Transverse colon (tissue), 4 donors: ENCODE measurements at regions of chr12 and their contacts with region 1.

Region 1: DNA sequence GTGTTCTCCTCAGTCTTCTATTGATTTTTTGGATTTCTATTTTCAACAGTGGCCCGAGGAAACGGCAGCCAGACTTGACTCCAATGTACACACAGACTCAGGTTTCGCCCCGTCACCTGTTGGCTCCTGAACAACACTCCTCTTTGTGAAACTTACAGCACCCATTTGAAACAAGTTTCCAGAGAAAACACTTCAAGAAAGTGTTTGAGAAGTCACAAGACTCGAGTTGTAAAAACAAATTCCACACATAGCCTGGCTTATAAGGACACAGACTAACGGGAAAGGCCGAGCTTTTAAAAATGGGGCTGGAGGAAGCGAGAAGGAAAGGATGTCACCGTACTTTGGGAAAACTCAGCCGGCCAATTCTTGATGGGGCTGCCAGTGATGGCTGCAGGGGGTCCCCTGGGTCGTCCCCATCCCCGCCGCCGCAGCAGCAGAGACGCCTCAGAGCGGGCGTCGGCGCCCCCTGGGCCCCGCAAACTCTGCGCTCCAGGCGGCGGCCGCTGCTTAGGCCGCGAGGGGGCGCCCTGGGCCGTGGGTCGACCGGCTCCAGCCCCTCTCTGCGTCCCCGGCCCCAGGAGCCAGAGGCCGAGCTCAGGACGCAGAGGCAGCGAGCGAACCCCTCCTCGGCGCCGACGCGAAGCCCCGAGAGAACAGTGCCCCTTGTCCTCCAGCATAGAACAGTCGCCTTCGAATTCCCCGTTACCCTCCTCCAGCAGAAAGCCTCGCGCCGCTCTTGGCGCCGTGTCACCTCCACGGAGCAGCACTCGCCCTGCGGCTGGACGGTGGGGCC is 106.9 kb downstream of the PRICKLE1 start:
- DNase-seq: peak; percentile 66
- H3K4me3 ChIP-seq: peak overlapping the region; percentile 50 to 70 (median 64)
- H3K27ac ChIP-seq: peak overlapping the region; percentile 82 to 87 (median 84)
- H3K4me1 ChIP-seq: peaks cover 0 to 18% (median 8%) of the 10 kb centered on the region in 4 donors
- H3K27me3 ChIP-seq: peaks cover 40% of the 10 kb centered on the region
- CTCF ChIP-seq: peak; percentile 71 to 95 (median 85)
- EP300 ChIP-seq: no peak
- POLR2A ChIP-seq: no peak

Region 2: DNA sequence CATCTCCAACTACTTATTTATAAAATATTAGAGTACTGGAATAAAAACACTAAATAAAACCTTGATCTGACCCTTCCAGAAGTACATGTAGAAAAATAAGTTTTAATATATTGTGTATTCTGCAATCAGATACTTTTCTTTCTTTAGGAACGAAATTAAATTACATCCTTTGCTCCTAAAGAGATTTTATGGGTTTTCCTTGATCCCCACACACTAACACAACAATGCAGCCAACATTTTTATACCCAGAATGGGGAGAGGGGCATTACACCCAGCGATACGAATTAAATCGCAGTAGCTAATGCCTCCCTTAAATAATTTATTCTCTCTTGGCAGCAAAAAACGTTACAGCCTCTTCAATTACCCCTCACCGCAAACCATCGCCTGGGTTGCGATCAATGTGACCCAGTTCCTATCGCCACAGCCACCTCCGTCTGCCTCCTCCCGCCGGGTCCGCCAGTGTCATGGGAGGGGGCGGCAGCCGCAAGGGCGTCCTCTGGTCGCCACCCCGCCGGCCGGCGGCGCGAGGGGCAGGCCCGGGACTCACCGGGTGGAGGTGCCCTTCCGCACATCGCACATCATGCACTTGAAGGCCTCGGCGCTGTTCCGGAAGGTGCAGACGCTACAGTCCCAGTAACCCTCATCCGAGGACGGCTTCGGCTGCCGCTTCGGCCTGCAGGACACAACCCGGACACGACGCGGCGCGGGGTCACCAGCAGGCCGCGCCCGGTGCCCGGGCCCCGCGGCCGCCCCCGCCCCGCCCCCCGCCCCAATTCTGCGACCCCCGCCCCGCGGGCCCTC is 245.4 kb before region 1 on chr12:
- in situ Hi-C with region 1: no loop called
- intact Hi-C with region 1: no loop called
- DNase-seq: peak; percentile 82
- H3K4me3 ChIP-seq: peak overlapping the region; percentile 49 to 95 (median 74)
- H3K27ac ChIP-seq: peak overlapping the region; percentile 97 to 98 (median 98)
- H3K4me1 ChIP-seq: peaks cover 0 to 38% (median 23%) of the 10 kb centered on the region in 4 donors
- H3K27me3 ChIP-seq: no peaks in the 10 kb centered on the region
- CTCF ChIP-seq: peak; percentile 36 to 65 (median 49)
- EP300 ChIP-seq: no peak
- POLR2A ChIP-seq: peak; percentile 47

Region 3: GRCh38 chr12:42284157-42284556 is 198.5 kb before region 1 on chr12:
- in situ Hi-C with region 1: no loop called
- intact Hi-C with region 1: no loop called
- DNase-seq: no peak
- H3K4me3 ChIP-seq: no peak overlapping the region
- H3K27ac ChIP-seq: no peak overlapping the region
- H3K4me1 ChIP-seq: no peaks in the 10 kb centered on the region
- H3K27me3 ChIP-seq: no peaks in the 10 kb centered on the region
- CTCF ChIP-seq: no peak
- EP300 ChIP-seq: no peak
- POLR2A ChIP-seq: no peak

Region 4: DNA sequence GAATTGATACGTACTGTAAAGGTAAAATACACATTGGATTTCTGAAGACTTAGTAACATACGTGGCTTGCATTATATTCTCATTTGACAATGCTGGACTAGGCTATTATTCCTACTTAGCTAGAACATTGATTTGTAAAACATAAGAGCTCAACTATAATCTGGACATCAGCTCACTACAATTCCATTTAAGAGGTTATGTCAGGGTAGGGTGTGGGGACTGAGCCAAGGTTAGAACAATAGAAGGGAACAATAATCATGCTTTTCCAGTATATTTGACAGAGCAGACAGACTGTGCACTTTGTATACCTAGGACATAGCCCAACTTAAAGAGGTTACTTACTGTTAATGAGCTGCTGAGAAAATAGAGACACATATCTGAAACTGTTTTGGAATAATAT is 167.5 kb before region 1 on chr12:
- in situ Hi-C with region 1: no loop called
- intact Hi-C with region 1: no loop called
- DNase-seq: no peak
- H3K4me3 ChIP-seq: no peak overlapping the region
- H3K27ac ChIP-seq: no peak overlapping the region
- H3K4me1 ChIP-seq: no peaks in the 10 kb centered on the region
- H3K27me3 ChIP-seq: no peaks in the 10 kb centered on the region
- CTCF ChIP-seq: no peak
- EP300 ChIP-seq: no peak
- POLR2A ChIP-seq: no peak

Region 5: GRCh38 chr12:42524716-42525115 is 42.1 kb after region 1 on chr12:
- in situ Hi-C with region 1: no loop called
- intact Hi-C with region 1: no loop called
- DNase-seq: no peak
- H3K4me3 ChIP-seq: no peak overlapping the region
- H3K27ac ChIP-seq: no peak overlapping the region
- H3K4me1 ChIP-seq: no peaks in the 10 kb centered on the region
- H3K27me3 ChIP-seq: no peaks in the 10 kb centered on the region
- CTCF ChIP-seq: no peak
- EP300 ChIP-seq: no peak
- POLR2A ChIP-seq: no peak

Region 6: GRCh38 chr12:42574851-42575266 is 92.2 kb after region 1 on chr12:
- in situ Hi-C with region 1: loop called in 1 of 4 experiments (anchors 25 kb)
- intact Hi-C with region 1: loop called (anchors 5 kb)
- DNase-seq: no peak
- H3K4me3 ChIP-seq: no peak overlapping the region
- H3K27ac ChIP-seq: no peak overlapping the region
- H3K4me1 ChIP-seq: no peaks in the 10 kb centered on the region
- H3K27me3 ChIP-seq: peaks cover 1% of the 10 kb centered on the region
- CTCF ChIP-seq: no peak
- EP300 ChIP-seq: no peak
- POLR2A ChIP-seq: no peak

Region 7: GRCh38 chr12:42589465-42590329 is 107.1 kb after region 1 on chr12 and contains the start of gene PRICKLE1:
- in situ Hi-C with region 1: loop called in 1 of 4 experiments (anchors 25 kb)
- intact Hi-C with region 1: no loop called
- DNase-seq: peak; percentile 20
- H3K4me3 ChIP-seq: peak within 1 kb of the TSS; percentile 48 to 69 (median 58)
- H3K27ac ChIP-seq: peak within 1 kb of the TSS; percentile 43 to 79 (median 51)
- H3K4me1 ChIP-seq: peaks cover 3 to 24% (median 13%) of the 10 kb centered on the region in 4 donors
- H3K27me3 ChIP-seq: peaks cover 50% of the 10 kb centered on the region
- CTCF ChIP-seq: no peak
- EP300 ChIP-seq: no peak
- POLR2A ChIP-seq: no peak
- total RNA-seq, gene PRICKLE1: 1.2 to 6.4 (median 2.8) TPM

Region 8: GRCh38 chr12:43282106-43282505 is 799.5 kb after region 1 on chr12:
- in situ Hi-C with region 1: loop called in 2 of 4 experiments (anchors 25 kb)
- intact Hi-C with region 1: no loop called
- DNase-seq: no peak
- H3K4me3 ChIP-seq: no peak overlapping the region
- H3K27ac ChIP-seq: no peak overlapping the region
- H3K4me1 ChIP-seq: no peaks in the 10 kb centered on the region
- H3K27me3 ChIP-seq: no peaks in the 10 kb centered on the region
- CTCF ChIP-seq: no peak
- EP300 ChIP-seq: no peak
- POLR2A ChIP-seq: no peak